ENCODE measurements at regions of chr7 and their contacts with region 1.

Region 1: GRCh38 chr7:153518202-153518984 is 533.8 kb upstream of the DPP6 start:
- DNase-seq: peak; percentile 86
- H3K4me3 ChIP-seq: no peak overlapping the region
- H3K27ac ChIP-seq: no peak overlapping the region
- H3K4me1 ChIP-seq: peaks cover 4% of the 10 kb centered on the region
- H3K27me3 ChIP-seq: no peaks in the 10 kb centered on the region
- CTCF ChIP-seq: no peak

Region 2: GRCh38 chr7:153567426-153567825 is 49.0 kb after region 1 on chr7:
- CTCF ChIA-PET with region 1: no interaction called
- dilution Hi-C with region 1: no loop called
- in situ Hi-C with region 1: no loop called
- intact Hi-C with region 1: loop called (anchors 2 kb)
- DNase-seq: peak; percentile 86
- H3K4me3 ChIP-seq: no peak overlapping the region
- H3K27ac ChIP-seq: no peak overlapping the region
- H3K4me1 ChIP-seq: no peaks in the 10 kb centered on the region
- H3K27me3 ChIP-seq: no peaks in the 10 kb centered on the region
- CTCF ChIP-seq: no peak

Measured in mammary epithelial cell (primary cell).